CD4-positive, alpha-beta memory T cell (primary cell): ENCODE measurements at regions of chr12 and their contacts with region 1.

Region 1: DNA sequence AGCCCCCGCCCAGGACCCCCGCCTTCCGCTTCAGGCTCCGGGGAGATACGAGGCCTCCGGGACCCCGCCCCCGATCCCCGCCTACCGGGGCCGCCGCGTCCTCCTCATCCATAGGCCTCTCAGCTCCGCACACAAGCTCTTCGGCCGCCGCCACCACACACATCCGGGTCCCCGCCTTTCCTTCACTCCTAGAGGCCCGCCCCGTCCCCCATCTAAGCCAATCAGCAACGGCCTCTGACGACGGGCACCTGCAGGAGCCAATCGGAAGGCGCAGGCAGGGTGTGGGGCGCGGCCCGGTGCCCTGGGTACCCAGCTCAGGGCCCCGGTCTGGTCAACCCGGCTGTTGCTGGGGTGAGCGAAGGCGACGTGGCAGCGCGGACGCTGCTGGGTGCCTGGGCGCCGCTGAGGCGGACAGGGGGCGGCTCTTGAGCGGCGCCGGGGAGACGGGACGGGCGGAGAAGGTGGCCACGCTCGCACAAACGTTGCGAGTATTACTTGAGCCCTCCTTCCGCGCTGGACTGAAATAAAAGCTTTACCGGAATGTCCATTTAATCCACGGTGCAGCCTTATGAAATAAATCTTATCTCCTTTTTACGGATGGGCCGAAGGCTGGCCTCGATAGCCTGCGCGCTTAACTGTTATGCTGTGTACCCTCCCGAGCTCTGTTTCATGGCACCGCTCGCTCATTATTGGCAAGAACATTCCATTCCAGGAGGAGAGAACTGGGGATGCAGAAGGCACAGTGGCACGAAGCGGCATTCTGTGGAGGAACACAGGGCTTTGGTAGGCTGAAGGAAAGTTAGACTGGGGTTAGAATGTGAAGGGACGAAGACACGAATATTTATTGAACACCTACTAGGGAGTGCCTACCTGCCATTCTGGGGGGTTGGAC is at the start of gene SPRYD3:
- DNase-seq: peak; percentile 96 to 99 (median 97)
- H3K4me3 ChIP-seq: peak within 1 kb of the TSS; percentile 73
- H3K4me3 Mint-ChIP-seq: peak within 1 kb of the TSS; percentile 89 to 97 (median 94)
- H3K27ac ChIP-seq: peak within 1 kb of the TSS; percentile 83
- H3K27ac Mint-ChIP-seq: peak within 1 kb of the TSS; percentile 92 to 98 (median 95)
- H3K4me1 ChIP-seq: peaks cover 29% of the 10 kb centered on the region
- H3K4me1 Mint-ChIP-seq: peaks cover 23 to 61% (median 39%) of the 10 kb centered on the region in 4 donors
- H3K27me3 ChIP-seq: no peaks in the 10 kb centered on the region
- H3K27me3 Mint-ChIP-seq: no peaks in the 10 kb centered on the region
- total RNA-seq, gene SPRYD3: 54.3 to 59.3 TPM

Region 2: GRCh38 chr12:53047221-53048042 is 32.0 kb before region 1 on chr12:
- CTCF ChIA-PET with region 1: interaction called, 11 read pairs
- POLR2A ChIA-PET with region 1: interaction called, 15 read pairs
- intact Hi-C with region 1: no loop called
- DNase-seq: peak; percentile 65 to 82 (median 73)
- H3K4me3 ChIP-seq: no peak overlapping the region
- H3K4me3 Mint-ChIP-seq: peak overlapping the region in 7 of 8 donors; percentile 45 to 66 (median 58)
- H3K27ac ChIP-seq: peak overlapping the region; percentile 69
- H3K27ac Mint-ChIP-seq: peak overlapping the region; percentile 25 to 97 (median 68)
- H3K4me1 ChIP-seq: peaks cover 14% of the 10 kb centered on the region
- H3K4me1 Mint-ChIP-seq: peaks cover 5 to 19% (median 12%) of the 10 kb centered on the region in 4 donors
- H3K27me3 ChIP-seq: no peaks in the 10 kb centered on the region
- H3K27me3 Mint-ChIP-seq: no peaks in the 10 kb centered on the region